Heart right ventricle (tissue), 16 donors: ENCODE measurements at regions of chr12 and their contacts with region 1.

Region 1: DNA sequence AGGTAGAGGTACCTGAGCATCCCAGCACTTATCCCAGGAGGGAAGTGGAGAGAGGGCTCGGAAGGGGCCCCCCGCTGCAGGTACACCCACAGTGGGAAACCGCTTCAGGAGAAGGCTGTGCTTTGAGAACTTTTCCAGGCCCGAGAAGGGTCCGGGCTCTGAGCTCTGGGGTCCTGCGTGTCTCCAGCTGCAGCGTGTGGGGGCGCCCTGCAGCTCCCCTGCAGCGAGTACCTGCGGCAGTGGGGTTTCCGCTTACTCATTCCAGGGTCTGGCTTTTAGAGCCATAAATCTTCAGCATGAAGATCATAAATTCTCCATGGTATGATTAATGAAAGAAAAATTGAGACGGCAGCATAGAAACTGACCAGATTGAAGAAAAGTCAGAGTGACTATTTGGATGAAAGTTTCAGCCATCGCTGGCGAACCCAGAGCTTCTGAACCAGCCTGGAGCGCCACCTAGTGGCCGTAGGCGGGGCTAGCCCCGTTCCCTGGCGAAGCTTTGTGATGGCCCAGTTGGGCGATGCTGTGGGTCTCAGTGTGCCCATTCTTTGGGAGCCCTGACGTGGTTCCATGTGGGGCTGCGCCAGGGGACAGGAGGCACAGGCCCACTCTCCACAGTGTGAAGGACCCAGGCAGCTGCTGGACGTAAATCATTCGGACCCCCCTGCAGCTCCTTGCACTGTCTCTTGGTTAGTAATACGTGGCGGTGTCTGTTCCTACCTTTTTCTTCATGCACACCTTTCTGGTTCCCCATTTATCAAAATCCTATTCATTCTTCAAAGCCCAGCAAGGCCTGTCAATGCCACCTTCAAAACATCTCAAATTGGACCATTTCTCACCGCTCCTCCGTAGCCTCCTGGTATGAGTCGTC is 198.2 kb downstream of the TSPAN9 start:
- DNase-seq: peak; percentile 71 to 83
- ATAC-seq: peak; percentile 25 to 81 (median 57)
- H3K4me3 ChIP-seq: no peak overlapping the region
- H3K27ac ChIP-seq: peak overlapping the region in 6 of 10 donors; percentile 71 to 87 (median 82)
- H3K4me1 ChIP-seq: peaks cover 23 to 97% (median 76%) of the 10 kb centered on the region in 9 donors
- H3K27me3 ChIP-seq: no peaks in the 10 kb centered on the region
- CTCF ChIP-seq: peak; percentile 97 to 100 (median 98)

Region 2: DNA sequence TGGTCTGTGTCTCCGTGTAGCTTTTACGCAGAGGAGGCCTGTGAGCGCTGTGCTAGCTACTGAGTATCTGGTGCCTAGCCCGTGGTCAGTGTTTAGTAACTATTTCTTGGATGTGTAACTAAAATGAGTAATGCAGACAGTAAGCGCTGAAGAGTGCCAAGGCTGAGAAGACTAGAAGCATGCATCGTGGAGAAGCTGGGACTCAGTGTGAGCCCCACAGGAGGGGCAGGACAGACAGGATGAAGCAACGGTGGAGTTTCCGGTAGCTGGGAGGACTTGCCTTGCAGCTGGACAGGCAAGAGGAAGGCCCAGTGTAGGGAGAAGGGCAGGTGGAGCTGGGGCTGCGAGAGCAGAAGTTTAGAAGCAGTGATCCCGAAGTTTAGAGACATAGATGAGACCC is 714.0 kb before region 1 on chr12:
- intact Hi-C with region 1: no loop called
- DNase-seq: no peak
- ATAC-seq: peak in 7 of 8 donors; percentile 5 to 65 (median 20)
- H3K4me3 ChIP-seq: no peak overlapping the region
- H3K27ac ChIP-seq: peak overlapping the region in 6 of 10 donors; percentile 2 to 64 (median 40)
- H3K4me1 ChIP-seq: peaks cover 2 to 36% (median 24%) of the 10 kb centered on the region in 9 donors
- H3K27me3 ChIP-seq: no peaks in the 10 kb centered on the region
- CTCF ChIP-seq: no peak

Region 3: DNA sequence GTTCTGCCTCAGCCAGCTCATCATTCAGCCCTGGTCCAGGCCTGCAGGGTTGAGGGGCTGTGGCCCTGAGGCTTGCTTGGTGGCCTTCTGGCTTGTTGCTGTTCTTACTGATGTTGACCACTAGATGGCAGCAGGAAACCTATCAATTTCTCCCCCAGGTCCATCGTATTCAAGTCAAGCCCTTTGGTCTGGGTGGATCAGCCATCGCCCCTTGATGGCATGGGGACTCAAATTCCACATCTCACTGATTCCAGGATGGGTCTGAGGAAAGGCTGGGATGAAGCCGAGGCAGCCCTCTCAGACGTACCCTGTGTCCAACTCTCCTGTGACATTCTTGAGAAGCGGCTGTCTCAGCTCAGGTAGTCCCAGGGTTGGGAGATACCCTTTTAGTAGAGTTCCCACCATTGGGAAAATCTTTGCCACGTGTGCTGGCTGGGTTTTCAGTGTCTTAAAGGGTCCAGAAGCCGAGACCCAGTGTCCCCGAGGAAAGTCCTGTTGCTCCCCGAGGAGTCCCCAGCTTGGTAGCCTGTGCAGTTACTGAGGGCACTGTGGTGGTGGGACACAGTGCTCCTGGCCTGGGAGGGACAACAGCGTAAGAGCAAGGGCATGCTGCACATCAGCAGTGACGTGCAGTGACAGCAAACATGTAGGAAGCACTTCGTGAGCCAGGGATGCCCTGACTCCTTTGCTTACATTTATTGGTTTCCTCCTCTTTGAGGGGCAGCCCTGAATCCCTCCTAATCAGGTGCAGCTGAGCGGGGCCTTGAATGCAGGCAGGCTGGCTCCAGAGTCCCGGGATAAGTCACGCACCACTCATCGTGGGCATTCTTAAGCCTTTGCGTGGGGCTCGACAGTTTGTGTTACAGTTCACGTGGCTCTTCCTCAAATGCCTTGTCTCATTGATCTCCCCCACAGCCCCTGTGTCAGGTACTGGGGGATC is 139.6 kb before region 1 on chr12:
- intact Hi-C with region 1: loop called (anchors 1 to 5 kb)
- DNase-seq: no peak
- ATAC-seq: peak; percentile 11 to 52 (median 44)
- H3K4me3 ChIP-seq: no peak overlapping the region
- H3K27ac ChIP-seq: peak overlapping the region in 1 of 10 donors; percentile 3
- H3K4me1 ChIP-seq: peaks cover 37 to 100% (median 88%) of the 10 kb centered on the region in 9 donors
- H3K27me3 ChIP-seq: peaks cover 0 to 12% (median 0%) of the 10 kb centered on the region in 7 donors
- CTCF ChIP-seq: peak; percentile 75 to 86 (median 82)

Region 4: DNA sequence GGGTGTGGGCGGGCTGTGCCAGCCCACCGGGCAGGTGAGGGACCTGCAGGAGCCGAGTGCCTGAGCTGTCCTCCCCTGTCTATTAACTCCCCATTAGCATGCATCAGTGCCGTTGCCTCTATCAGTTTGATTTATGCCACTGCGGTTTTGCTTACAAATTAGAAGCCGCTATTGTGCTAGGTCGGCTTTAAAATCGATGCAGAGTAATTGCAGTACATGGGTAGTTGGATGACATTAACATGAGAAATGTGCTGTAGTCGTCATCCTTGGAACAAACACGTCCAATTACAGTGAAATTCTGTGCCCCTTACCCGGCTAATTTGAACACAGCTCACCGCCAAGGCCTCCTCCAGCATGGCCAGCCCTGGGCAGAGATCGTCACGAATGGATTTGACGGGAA is 52.4 kb before region 1 on chr12:
- intact Hi-C with region 1: loop called in 1 of 10 experiments (anchors 5 kb)
- DNase-seq: no peak
- ATAC-seq: no peak
- H3K4me3 ChIP-seq: no peak overlapping the region
- H3K27ac ChIP-seq: peak overlapping the region in 3 of 10 donors; percentile 33 to 89 (median 54)
- H3K4me1 ChIP-seq: peaks cover 42 to 95% (median 88%) of the 10 kb centered on the region in 9 donors
- H3K27me3 ChIP-seq: no peaks in the 10 kb centered on the region
- CTCF ChIP-seq: no peak